G401 (cell line): ENCODE measurements at regions of chr2 and their contacts with region 1.

Region 1: DNA sequence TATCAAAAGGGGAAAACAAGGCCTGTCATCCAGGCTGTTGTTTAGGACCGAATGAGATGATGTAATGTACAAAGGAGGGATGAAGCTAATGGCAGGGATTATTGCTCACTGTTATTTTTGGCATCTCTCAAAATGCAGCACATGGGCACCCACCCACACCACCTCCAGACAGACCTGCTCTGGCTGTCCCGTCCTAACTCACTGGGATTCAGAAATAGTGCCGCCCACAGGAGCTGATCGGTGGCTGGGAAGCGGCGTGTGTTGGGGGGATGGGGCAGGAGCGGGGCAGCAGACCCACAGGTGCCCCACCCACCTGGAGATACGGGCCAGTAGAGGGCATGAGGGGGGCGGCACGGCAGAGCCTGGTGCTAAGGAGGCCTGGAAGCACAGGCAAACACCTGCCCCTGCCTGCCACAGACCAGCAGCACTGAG is 52.2 kb downstream of the CRACDL start:
- DNase-seq: no peak

Region 2: DNA sequence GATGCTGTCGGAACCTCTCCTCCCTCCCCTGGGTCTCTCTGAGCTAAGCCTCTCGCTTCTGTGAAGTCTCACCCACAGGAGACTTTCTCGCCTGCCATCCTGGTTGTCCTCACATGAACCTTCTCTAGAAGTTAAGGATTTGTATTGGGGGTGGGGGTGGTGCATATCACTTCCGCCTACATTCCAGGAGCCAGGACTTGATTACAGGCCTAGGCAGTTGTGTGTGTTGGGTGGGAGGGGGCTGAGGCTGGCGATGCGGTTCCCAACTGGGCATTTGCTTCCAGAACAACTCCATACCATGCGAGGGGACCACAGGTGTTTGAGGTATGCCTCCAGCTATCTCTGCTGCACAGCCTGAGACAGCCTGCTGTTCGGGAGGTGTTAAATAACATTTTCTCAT is 96.1 kb before region 1 on chr2:
- in situ Hi-C with region 1: no loop called
- DNase-seq: no peak

Region 3: DNA sequence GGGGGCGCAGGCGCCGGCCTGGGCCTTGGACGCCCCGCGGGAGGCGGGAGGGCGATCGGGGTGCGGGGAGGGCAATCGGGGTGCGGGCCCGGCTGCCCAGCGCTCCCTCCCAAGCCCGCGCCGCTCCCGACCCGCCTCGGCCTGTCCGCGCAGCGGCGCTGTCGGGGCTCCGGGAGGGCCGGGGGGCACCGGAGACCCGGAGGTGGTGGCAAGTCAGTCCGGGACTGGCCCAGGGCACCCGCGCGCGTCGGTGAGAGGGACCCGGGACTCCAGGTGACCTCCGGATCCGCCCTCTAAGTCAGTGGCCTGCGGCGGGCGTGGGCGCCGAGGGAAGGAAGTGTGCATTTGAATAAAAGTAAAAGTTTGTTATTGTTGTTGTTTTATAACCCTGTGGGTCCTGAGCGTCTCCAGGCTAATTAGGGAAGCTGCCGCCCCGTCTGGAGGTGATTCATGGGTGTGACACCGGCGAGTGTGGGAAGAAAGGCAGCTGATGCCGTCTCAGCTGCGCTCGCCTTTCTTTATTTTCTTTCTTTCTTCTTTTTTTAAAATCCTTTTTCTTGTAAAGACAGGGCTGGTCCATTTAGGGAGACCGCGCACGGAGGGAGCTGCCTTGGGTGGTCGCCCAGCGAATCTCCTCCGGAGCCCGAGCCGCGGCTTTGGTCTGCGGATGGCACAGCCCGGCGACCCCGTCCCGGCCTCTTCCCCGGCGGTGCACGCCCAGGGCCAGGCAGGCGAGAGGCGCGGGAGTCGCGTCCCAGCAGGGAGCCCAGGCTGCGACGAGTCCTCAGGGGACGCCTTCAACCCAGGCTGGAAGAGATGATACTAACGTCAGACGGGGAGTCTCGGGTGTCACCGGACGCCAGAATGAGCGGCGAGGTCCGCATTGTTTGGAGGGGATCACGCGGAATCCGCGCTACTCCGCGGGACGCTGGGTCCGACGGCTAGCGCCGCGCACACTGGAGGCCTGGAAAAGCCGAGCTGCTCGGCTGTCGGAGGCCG is 52.9 kb after region 1 on chr2:
- in situ Hi-C with region 1: loop called (anchors 5 kb)
- DNase-seq: no peak

Region 4: GRCh38 chr2:98959810-98960507 is 76.2 kb after region 1 on chr2:
- in situ Hi-C with region 1: no loop called
- DNase-seq: peak; percentile 51

Region 5: GRCh38 chr2:99171377-99172140 is 287.8 kb after region 1 on chr2:
- in situ Hi-C with region 1: no loop called
- DNase-seq: no peak